ENCODE measurements at regions of chr7 and their contacts with region 1.

Region 1: GRCh38 chr7:6435486-6436384 is 12.0 kb downstream of the DAGLB start:
- DNase-seq: peak; percentile 91
- ATAC-seq: peak; percentile 79
- H3K4me3 Mint-ChIP-seq: peak overlapping the region; percentile 69
- H3K27ac Mint-ChIP-seq: peak overlapping the region; percentile 90
- H3K4me1 Mint-ChIP-seq: peaks cover 43% of the 10 kb centered on the region
- H3K27me3 Mint-ChIP-seq: no peaks in the 10 kb centered on the region

Region 2: DNA sequence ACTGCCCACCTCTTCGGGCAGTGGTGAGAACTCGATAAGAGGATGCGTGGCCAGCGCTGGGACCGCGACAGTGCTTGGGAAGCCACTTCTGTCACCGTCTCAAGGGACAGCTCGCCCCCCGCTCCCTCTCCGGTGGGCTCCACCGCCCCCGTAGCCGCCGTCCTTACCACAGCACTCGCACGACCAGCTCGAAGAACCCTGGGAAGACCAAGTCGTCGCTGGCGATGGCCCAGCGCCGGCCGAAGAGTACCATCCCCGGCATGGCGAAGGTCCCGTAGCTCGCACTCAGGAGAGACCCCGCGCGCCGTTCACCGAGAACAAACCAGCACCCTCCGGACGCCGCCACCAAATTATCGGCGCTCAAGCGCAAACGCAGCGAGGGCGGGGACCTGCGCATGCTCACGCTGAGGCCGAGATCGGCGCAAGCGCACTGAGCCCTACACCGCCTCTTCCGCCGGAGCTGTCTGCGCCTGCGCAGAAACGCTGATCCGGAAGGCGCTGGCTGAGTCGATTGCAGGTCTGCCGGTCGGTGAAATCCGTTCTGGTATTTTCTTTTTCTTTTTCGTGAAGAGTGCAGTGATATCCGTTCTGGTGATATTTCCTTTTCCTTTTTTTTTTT is 12.0 kb after region 1 on chr7 and contains the start of gene DAGLB:
- CTCF ChIA-PET with region 1: interaction called, 12 read pairs
- POLR2A ChIA-PET with region 1: interaction called, 25 read pairs
- DNase-seq: peak; percentile 96
- ATAC-seq: peak; percentile 91
- H3K4me3 Mint-ChIP-seq: peak within 1 kb of the TSS; percentile 96
- H3K27ac Mint-ChIP-seq: peak within 1 kb of the TSS; percentile 91
- H3K4me1 Mint-ChIP-seq: peaks cover 31% of the 10 kb centered on the region
- H3K27me3 Mint-ChIP-seq: no peaks in the 10 kb centered on the region
- total RNA-seq, gene DAGLB: 25.1 to 28.5 TPM